GM23248 (cell line): ENCODE measurements at regions of chr3 and their contacts with region 1.

Region 1: GRCh38 chr3:53195602-53196574 is 34.9 kb downstream of the PRKCD start:
- DNase-seq: peak; percentile 69
- H3K4me3 ChIP-seq: no peak overlapping the region
- H3K27ac ChIP-seq: no peak overlapping the region
- H3K4me1 ChIP-seq: no peaks in the 10 kb centered on the region
- H3K27me3 ChIP-seq: no peaks in the 10 kb centered on the region

Region 2: DNA sequence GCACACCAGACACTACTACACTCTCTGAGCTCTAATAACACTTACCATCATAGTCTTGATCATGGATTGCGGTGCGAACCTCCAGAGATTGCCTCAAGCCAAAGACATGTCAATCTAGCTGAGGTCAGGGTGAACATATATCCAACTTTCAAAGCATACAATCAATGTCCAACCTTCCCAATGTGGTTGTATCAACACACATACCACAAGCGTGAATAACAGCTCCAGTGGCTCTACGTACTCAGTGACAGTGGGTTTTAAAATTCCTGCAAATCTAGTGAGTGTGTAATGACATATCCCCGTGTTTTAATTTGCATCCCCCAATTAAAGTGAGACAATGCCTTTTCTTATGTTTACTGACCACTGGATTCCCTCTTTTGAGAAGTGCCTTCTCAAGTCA is 179.7 kb before region 1 on chr3:
- in situ Hi-C with region 1: no loop called
- DNase-seq: no peak
- H3K4me3 ChIP-seq: no peak overlapping the region
- H3K27ac ChIP-seq: no peak overlapping the region
- H3K4me1 ChIP-seq: no peaks in the 10 kb centered on the region
- H3K27me3 ChIP-seq: no peaks in the 10 kb centered on the region

Region 3: GRCh38 chr3:53114011-53114400 is 81.9 kb before region 1 on chr3:
- in situ Hi-C with region 1: loop called (anchors 10 kb)
- DNase-seq: peak; percentile 86
- H3K4me3 ChIP-seq: no peak overlapping the region
- H3K27ac ChIP-seq: peak overlapping the region; percentile 32
- H3K4me1 ChIP-seq: peaks cover 30% of the 10 kb centered on the region
- H3K27me3 ChIP-seq: no peaks in the 10 kb centered on the region